ENCODE measurements at regions of chr11 and their contacts with region 1.

Region 1: DNA sequence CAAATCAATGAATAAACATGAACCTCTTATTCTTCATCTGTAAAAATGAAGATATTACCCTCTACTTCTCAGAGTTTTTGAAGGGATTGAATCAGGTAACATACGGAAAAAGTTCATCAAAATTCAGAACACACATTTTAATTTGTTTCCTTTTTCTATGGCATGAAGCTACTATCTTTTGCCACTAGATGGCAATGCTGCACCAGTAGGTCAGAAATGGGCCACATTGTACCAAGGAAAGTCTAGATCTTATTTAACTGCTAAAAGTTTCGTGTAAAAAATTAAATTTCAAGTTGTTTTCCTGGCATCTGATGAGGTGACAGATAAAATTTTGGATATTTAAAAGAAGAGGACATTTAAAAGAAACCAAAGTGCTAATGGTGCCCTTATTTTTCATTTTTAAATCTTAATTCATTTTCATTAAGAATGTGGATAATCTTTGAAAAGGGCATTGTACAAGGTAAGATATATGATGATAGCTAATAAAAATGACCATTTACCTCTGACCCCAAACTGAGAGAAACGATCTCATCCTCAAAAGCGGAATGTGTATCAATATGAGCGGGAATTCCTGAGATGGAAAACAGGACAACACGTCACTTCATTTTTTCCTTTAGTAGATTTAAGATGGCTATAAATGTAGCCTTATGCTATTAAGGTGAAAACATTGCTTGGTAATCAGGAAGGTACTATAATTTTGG is 16.1 kb downstream of the ALKBH8 start:
- DNase-seq: peak; percentile 38
- ATAC-seq: peak; percentile 65
- H3K4me3 Mint-ChIP-seq: no peak overlapping the region
- H3K27ac Mint-ChIP-seq: no peak overlapping the region
- H3K4me1 Mint-ChIP-seq: peaks cover 10% of the 10 kb centered on the region
- H3K27me3 Mint-ChIP-seq: no peaks in the 10 kb centered on the region
- CTCF ChIP-seq: peak; percentile 84

Region 2: GRCh38 chr11:107538821-107539220 is 10.6 kb before region 1 on chr11:
- CTCF ChIA-PET with region 1: interaction called, 36 read pairs
- POLR2A ChIA-PET with region 1: no interaction called
- intact Hi-C with region 1: no loop called
- DNase-seq: no peak
- ATAC-seq: no peak
- H3K4me3 Mint-ChIP-seq: no peak overlapping the region
- H3K27ac Mint-ChIP-seq: no peak overlapping the region
- H3K4me1 Mint-ChIP-seq: peaks cover 6% of the 10 kb centered on the region
- H3K27me3 Mint-ChIP-seq: no peaks in the 10 kb centered on the region
- CTCF ChIP-seq: no peak

Region 3: DNA sequence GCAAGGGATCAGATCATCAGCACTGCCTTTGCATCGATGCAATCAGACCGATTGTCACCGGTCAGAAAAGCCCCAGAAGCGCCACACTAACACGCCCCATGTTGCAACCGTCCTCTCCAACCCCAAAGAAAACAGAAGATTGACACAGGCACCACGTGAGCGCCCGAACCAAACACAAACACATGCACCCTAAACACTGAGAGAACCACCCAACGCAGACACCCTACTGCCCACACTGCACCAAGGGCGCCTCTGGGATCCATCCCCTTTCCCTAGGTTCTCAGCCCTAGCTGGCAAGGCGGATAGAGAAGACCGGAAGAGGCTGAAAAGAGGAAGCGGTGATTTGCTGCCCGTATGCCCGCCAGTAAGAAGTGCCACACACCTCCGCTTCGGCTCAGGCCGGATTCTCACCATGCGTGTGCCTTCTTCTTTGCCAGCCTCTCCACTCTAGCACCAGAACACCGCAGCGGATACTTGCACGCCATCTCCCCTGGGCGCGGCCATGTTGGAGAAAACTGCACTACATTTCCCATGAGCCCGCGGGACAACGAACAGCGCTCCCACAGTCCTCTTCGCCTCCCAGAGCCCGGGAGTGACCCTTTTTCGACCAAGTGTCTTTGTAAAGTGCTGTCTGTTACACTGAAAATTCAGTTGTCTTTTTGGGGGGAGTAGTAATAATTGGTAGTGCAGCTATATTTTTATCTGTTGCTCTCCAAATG is 16.0 kb after region 1 on chr11 and contains the start of gene ALKBH8:
- CTCF ChIA-PET with region 1: interaction called, 111 read pairs
- POLR2A ChIA-PET with region 1: no interaction called
- intact Hi-C with region 1: no loop called
- DNase-seq: peak; percentile 91
- ATAC-seq: peak; percentile 89
- H3K4me3 Mint-ChIP-seq: peak within 1 kb of the TSS; percentile 99
- H3K27ac Mint-ChIP-seq: peak within 1 kb of the TSS; percentile 100
- H3K4me1 Mint-ChIP-seq: peaks cover 62% of the 10 kb centered on the region
- H3K27me3 Mint-ChIP-seq: no peaks in the 10 kb centered on the region
- CTCF ChIP-seq: no peak
- total RNA-seq, gene ALKBH8: 13.3 to 13.4 TPM

Region 4: GRCh38 chr11:107705027-107705426 is 155.6 kb after region 1 on chr11:
- CTCF ChIA-PET with region 1: no interaction called
- POLR2A ChIA-PET with region 1: no interaction called
- intact Hi-C with region 1: no loop called
- DNase-seq: no peak
- ATAC-seq: no peak
- H3K4me3 Mint-ChIP-seq: no peak overlapping the region
- H3K27ac Mint-ChIP-seq: no peak overlapping the region
- H3K4me1 Mint-ChIP-seq: no peaks in the 10 kb centered on the region
- H3K27me3 Mint-ChIP-seq: peaks cover 25% of the 10 kb centered on the region
- CTCF ChIP-seq: no peak